Gastrocnemius medialis (tissue), 4 donors: ENCODE measurements at regions of chr6 and their contacts with region 1.

Region 1: DNA sequence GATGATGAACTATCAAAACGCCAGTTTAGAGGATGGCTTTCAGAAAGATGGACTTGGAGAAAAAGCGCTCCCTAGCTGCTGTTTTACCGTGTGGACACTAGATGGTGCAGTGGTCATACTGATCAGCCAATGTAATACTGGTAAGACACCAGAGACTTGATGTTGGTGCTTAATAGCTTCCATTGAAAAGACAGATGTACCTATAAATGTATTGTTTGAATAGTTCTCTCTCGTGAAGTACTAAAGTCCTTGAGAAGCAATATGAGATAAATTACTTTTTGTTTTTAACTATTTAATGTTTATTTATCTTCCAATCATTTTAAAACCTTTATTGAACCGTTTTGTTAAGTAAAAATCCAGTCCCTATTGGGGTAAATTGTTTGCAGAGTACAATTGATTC is 63.9 kb upstream of the FUCA2 start:
- DNase-seq: peak; percentile 18 to 33
- ATAC-seq: peak; percentile 86
- H3K4me3 ChIP-seq: no peak overlapping the region
- H3K27ac ChIP-seq: no peak overlapping the region
- H3K4me1 ChIP-seq: peaks cover 0 to 4% of the 10 kb centered on the region in 2 donors
- H3K27me3 ChIP-seq: no peaks in the 10 kb centered on the region
- CTCF ChIP-seq: peak; percentile 63 to 87 (median 84)
- POLR2A ChIP-seq: no peak

Region 2: DNA sequence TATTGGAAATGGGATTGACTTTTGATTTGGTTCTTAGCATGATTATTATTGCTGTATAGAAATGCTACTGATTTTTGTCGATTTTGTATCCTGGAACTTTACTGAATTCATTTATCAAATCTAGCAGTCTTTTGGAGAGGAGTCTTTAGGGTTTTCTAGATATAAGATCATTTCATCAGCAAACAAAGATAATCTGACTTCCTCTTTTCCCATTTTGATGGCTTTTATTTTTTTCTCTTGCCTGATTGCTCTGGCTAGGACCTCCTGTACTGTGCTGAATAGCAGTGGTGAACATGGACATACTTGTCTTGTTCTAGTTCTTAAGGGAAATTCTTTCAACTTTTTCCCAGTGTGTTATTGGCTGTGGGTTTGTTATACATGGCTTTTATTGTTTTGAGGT is 353.4 kb after region 1 on chr6:
- in situ Hi-C with region 1: no loop called
- intact Hi-C with region 1: no loop called
- DNase-seq: no peak
- ATAC-seq: no peak
- H3K4me3 ChIP-seq: no peak overlapping the region
- H3K27ac ChIP-seq: no peak overlapping the region
- H3K4me1 ChIP-seq: no peaks in the 10 kb centered on the region
- H3K27me3 ChIP-seq: no peaks in the 10 kb centered on the region
- CTCF ChIP-seq: no peak
- POLR2A ChIP-seq: no peak

Region 3: DNA sequence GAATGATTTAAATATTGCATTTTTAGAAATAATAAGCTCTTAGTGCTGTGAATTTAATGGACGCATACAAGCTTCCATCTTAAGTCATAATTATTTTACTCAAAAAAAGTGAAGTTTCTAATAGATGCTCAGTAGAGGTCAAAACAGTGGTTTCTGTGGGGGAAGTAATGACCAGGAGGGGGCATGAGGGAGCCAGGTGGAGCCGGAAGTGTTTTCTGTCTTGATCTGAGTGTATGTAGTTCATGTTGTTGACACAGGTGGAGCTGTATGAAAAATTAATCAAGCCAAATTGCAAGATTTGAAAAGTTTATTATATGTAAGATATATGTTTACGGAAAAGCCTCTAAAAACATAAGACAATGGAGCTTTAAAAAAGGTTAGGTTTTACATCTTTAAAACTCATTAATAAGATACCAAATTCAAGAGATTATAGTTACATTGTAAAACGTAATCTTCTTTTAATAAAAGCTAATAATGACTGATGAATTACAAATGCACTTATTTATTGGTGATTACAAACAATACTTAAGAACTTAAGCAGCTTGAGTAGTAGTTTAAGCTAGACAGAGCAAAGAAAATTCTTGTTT is 364.7 kb after region 1 on chr6:
- in situ Hi-C with region 1: no loop called
- intact Hi-C with region 1: loop called (anchors 1 kb)
- DNase-seq: no peak
- ATAC-seq: no peak
- H3K4me3 ChIP-seq: no peak overlapping the region
- H3K27ac ChIP-seq: no peak overlapping the region
- H3K4me1 ChIP-seq: no peaks in the 10 kb centered on the region
- H3K27me3 ChIP-seq: no peaks in the 10 kb centered on the region
- CTCF ChIP-seq: peak in 4 of 5 experiments; percentile 2 to 48 (median 28)
- POLR2A ChIP-seq: no peak